ENCODE measurements at regions of chr9 and their contacts with region 1.

Region 1: GRCh38 chr9:34701769-34702736 is 7.9 kb downstream of the CCL21 start:
- H3K4me3 ChIP-seq: peak overlapping the region; percentile 48
- H3K27ac ChIP-seq: no peak overlapping the region
- H3K4me1 ChIP-seq: peaks cover 2% of the 10 kb centered on the region; the same call in 1 of the 2 replicates
- CTCF ChIP-seq: peak; percentile 59

Region 2: DNA sequence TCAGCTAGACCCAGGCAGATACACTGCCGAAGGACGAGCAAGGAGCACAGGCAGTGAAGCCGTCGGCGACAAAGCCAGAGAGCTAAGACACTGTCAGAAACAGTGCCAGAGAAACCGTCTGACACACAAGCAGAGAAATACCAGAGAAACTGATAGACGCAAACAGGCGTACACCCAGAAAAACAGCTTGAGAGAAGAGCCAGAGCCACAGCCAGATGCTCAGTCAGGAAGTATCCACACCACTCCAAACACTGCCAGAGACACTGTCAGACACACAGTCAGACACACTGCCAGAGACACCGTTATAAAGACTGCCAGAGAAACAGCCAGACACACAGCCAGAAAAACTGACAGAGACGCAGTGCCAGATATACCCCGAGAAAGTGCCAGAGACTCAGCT is 131.7 kb before region 1 on chr9:
- CTCF ChIA-PET with region 1: no interaction called
- POLR2A ChIA-PET with region 1: no interaction called
- H3K4me3 ChIP-seq: no peak overlapping the region
- H3K27ac ChIP-seq: no peak overlapping the region
- H3K4me1 ChIP-seq: no peaks in the 10 kb centered on the region
- CTCF ChIP-seq: no peak

Region 3: GRCh38 chr9:34646211-34647083 is 55.6 kb before region 1 on chr9 and contains the start of gene GALT:
- CTCF ChIA-PET with region 1: interaction called, 10 read pairs
- POLR2A ChIA-PET with region 1: interaction called, 3 read pairs
- H3K4me3 ChIP-seq: peak within 1 kb of the TSS; percentile 82
- H3K27ac ChIP-seq: peak within 1 kb of the TSS; percentile 84
- H3K4me1 ChIP-seq: no peaks in the 10 kb centered on the region; the same call in 1 of the 2 replicates
- CTCF ChIP-seq: peak; percentile 98

Region 4: GRCh38 chr9:34665381-34666250 is 36.4 kb before region 1 on chr9:
- CTCF ChIA-PET with region 1: interaction called, 13 read pairs
- POLR2A ChIA-PET with region 1: interaction called, 3 read pairs
- H3K4me3 ChIP-seq: peak overlapping the region; percentile 74
- H3K27ac ChIP-seq: peak overlapping the region; percentile 87
- H3K4me1 ChIP-seq: peaks cover 5% of the 10 kb centered on the region; the same call in 1 of the 2 replicates
- CTCF ChIP-seq: no peak; the same call in 1 of the 2 replicates

Region 5: GRCh38 chr9:34675048-34675714 is 26.9 kb before region 1 on chr9:
- CTCF ChIA-PET with region 1: interaction called, 116 read pairs
- POLR2A ChIA-PET with region 1: no interaction called
- H3K4me3 ChIP-seq: no peak overlapping the region
- H3K27ac ChIP-seq: no peak overlapping the region
- H3K4me1 ChIP-seq: no peaks in the 10 kb centered on the region
- CTCF ChIP-seq: peak; percentile 81

Region 6: DNA sequence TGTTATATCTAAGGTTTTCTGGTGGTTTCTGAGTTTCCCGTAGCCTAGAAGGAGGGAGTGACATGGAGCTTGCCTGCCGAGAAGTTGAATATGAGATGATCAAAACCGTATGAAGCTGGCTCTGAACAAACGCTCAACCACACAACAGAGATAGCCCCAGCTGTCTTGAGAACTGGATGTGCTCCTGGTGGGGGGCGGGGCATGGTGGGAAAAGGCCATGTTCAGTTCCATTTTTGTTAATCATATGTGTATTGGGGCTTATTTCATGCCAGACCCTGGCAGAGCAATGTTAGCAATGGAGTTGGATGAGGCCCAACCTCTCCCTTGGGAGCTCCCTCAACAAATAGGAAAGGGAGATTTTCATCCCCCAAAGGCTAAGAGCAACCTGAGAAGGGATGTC is 15.8 kb before region 1 on chr9:
- CTCF ChIA-PET with region 1: interaction called, 99 read pairs
- POLR2A ChIA-PET with region 1: no interaction called
- H3K4me3 ChIP-seq: no peak overlapping the region
- H3K27ac ChIP-seq: no peak overlapping the region
- H3K4me1 ChIP-seq: no peaks in the 10 kb centered on the region
- CTCF ChIP-seq: no peak

Region 7: GRCh38 chr9:34717996-34718614 is 16.1 kb after region 1 on chr9:
- CTCF ChIA-PET with region 1: interaction called, 31 read pairs
- POLR2A ChIA-PET with region 1: no interaction called
- H3K4me3 ChIP-seq: no peak overlapping the region
- H3K27ac ChIP-seq: no peak overlapping the region
- H3K4me1 ChIP-seq: no peaks in the 10 kb centered on the region
- CTCF ChIP-seq: no peak

Measured in HEK293 (cell line).